ENCODE measurements at regions of chr2 and their contacts with region 1.

Region 1: DNA sequence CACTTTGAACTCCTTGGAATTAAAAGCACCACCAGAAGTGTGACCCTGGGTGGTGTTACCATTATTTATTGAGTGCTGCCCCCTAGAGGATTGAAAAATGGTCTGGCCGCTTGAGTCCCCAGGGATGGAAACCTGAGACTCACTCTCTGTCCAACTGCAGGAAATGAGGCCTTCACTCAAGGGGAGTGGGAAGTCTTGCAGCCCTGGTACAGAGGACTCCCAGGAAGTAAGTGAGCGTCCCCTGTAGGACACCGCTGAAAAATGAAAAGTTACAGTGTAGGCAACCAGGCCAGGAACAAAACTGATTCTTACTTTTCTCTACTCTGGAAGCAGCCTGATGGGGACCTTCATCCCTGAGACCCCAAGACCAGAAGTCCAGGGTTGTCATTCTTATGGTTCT is 2.2 kb upstream of the NRP2 start:
- DNase-seq: peak; percentile 92
- H3K4me3 ChIP-seq: no peak overlapping the region
- H3K27ac ChIP-seq: peak overlapping the region in 2 of 4 donors; percentile 94 to 98
- H3K4me1 ChIP-seq: peaks cover 14 to 29% (median 27%) of the 10 kb centered on the region in 4 donors
- H3K27me3 ChIP-seq: no peaks in the 10 kb centered on the region
- CTCF ChIP-seq: peak; percentile 53 to 70 (median 69)
- EP300 ChIP-seq: no peak
- POLR2A ChIP-seq: no peak

Region 2: GRCh38 chr2:204108330-204108751 is 1571.7 kb before region 1 on chr2:
- intact Hi-C with region 1: loop called (anchors 10 kb)
- DNase-seq: no peak
- H3K4me3 ChIP-seq: no peak overlapping the region
- H3K27ac ChIP-seq: no peak overlapping the region
- H3K4me1 ChIP-seq: peaks cover 15 to 53% (median 45%) of the 10 kb centered on the region in 4 donors
- H3K27me3 ChIP-seq: no peaks in the 10 kb centered on the region
- CTCF ChIP-seq: peak; percentile 60 to 71 (median 70)
- EP300 ChIP-seq: no peak
- POLR2A ChIP-seq: no peak

Region 3: DNA sequence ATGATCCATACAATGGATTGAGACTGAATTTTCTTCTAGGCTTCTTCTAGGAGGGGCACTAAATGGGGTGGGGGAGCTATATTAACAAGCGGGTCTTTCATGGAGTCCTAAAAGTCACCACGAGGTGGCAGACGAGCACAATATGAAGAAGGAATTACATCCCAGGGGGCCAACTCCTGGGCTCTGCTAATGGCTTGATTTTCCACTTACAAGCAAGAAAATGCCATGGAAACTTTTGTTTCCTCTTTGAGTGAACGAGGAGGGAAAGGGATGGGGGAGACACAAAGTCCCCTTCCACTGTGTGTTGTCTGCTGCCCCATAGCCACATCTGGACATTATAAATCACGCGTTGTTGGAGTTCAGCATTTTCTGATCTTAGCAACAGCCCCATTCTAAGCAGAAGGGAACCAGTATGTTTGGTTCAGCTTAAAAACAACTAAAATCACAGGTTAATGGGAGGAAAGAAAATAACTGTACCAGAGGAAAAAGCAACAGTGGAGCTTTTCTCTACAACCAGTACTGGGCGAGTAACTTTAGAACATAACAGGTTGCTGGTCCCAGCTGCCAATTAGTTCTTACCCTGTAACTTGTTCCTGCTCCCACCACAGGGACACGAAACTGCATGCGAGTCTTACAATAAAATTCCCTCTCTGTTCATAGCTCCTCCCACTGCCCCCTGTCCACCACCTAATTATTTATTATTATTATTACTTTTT is 1419.7 kb before region 1 on chr2:
- intact Hi-C with region 1: loop called (anchors 5 kb)
- DNase-seq: no peak
- H3K4me3 ChIP-seq: no peak overlapping the region
- H3K27ac ChIP-seq: no peak overlapping the region
- H3K4me1 ChIP-seq: peaks cover 0 to 22% (median 21%) of the 10 kb centered on the region in 4 donors
- H3K27me3 ChIP-seq: no peaks in the 10 kb centered on the region
- CTCF ChIP-seq: peak; percentile 78 to 82 (median 80)
- EP300 ChIP-seq: no peak
- POLR2A ChIP-seq: no peak

Region 4: GRCh38 chr2:204691911-204692510 is 988.1 kb before region 1 on chr2:
- intact Hi-C with region 1: loop called (anchors 10 kb)
- DNase-seq: no peak
- H3K4me3 ChIP-seq: no peak overlapping the region
- H3K27ac ChIP-seq: no peak overlapping the region
- H3K4me1 ChIP-seq: peaks cover 6 to 49% (median 41%) of the 10 kb centered on the region in 4 donors
- H3K27me3 ChIP-seq: no peaks in the 10 kb centered on the region
- CTCF ChIP-seq: peak; percentile 72 to 80 (median 80)
- EP300 ChIP-seq: no peak
- POLR2A ChIP-seq: no peak

Region 5: DNA sequence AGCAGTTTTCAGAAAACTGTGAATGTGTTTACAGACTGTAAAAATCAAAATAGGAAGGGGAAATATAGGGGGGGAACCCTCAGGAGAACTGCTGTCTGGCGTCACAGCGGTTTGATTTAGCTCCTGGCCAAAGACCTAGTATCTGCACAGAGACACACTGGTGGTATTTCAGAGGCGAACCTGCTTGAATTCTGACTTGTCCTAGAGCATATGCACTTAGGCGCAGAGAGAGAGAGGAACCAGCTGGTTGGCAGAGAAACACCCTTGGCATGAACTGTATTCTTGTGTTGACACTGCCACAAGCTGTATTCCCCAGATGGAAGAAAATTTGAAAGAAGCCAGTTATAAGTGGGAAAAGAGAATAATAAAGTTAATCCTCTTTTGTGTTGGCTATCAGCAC is 504.2 kb before region 1 on chr2:
- intact Hi-C with region 1: loop called (anchors 10 kb)
- DNase-seq: no peak
- H3K4me3 ChIP-seq: no peak overlapping the region
- H3K27ac ChIP-seq: no peak overlapping the region
- H3K4me1 ChIP-seq: peaks cover 0 to 5% (median 0%) of the 10 kb centered on the region in 4 donors
- H3K27me3 ChIP-seq: no peaks in the 10 kb centered on the region
- CTCF ChIP-seq: no peak
- EP300 ChIP-seq: no peak
- POLR2A ChIP-seq: no peak

Region 6: DNA sequence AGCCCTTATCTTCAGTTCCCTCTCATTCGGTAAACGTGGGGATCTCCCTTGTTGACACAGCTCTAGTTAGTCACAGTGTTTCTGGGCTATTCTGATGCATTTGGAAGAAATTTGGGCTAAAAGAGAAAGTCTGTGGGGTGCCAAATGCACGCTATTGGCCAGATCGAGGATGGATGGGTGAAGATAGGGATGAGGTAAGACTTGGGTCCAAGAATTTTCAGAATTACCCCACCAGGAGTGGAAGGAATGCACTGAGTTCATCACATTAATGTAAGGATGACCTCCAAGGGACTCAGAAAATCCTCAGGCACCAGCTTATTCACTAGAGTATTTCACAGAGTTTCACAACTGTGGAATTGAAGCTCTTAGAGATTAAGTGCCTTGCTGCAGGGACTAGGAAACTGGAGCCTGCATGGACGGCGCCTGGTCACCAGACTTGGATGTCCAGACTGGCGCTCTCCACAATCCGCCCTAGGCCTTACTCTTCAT is 51.6 kb after region 1 on chr2:
- intact Hi-C with region 1: no loop called
- DNase-seq: no peak
- H3K4me3 ChIP-seq: no peak overlapping the region
- H3K27ac ChIP-seq: peak overlapping the region; percentile 80 to 98 (median 90)
- H3K4me1 ChIP-seq: peaks cover 17 to 100% (median 99%) of the 10 kb centered on the region in 4 donors
- H3K27me3 ChIP-seq: no peaks in the 10 kb centered on the region
- CTCF ChIP-seq: no peak
- EP300 ChIP-seq: no peak
- POLR2A ChIP-seq: no peak

Region 7: GRCh38 chr2:205925373-205926337 is 245.6 kb after region 1 on chr2:
- intact Hi-C with region 1: loop called (anchors 10 kb)
- DNase-seq: no peak
- H3K4me3 ChIP-seq: peak overlapping the region; percentile 36 to 48 (median 44)
- H3K27ac ChIP-seq: peak overlapping the region; percentile 43 to 64 (median 51)
- H3K4me1 ChIP-seq: peaks cover 0 to 28% (median 21%) of the 10 kb centered on the region in 4 donors
- H3K27me3 ChIP-seq: no peaks in the 10 kb centered on the region
- CTCF ChIP-seq: peak; percentile 89 to 96 (median 91)
- EP300 ChIP-seq: no peak
- POLR2A ChIP-seq: no peak

Measured in esophagus muscularis mucosa (tissue), 4 donors.